ENCODE measurements at regions of chr5 and their contacts with region 1.

Region 1: DNA sequence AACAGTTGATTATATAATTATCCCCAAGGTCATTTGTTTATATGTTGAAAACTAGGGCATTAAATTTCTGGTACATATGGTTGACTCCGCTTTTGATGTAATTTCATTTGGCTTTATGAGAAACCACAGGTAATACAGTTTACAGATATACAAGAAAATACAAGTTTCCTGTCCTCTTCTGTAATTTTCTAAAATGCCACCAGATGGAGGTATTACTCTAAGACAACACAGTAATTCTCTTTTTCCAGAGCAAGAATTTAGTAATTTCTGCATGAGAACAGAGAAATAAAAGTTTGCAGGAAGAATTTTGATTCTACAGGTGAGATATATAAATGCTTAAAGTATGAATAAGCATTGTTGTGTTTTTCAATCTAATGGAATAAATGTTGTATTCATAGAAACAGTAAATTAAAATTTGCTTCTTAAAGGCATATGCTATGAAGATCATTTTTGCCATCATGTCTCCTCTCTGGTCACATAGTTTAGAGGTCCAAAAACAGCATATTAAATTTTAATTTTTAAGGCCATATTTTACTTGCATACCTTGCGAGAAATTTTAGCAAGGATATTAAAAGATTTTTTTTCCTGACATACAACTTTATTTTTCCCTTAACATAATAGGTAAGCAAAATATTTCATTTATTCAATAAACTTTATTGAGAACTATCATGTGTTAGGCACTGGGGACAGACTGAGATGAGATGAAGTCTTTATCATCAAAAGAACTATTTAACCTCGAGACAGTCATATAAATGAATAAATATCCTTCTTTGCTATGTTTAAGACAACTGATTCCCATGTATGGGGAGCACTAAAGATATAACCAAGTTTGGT is 22.7 kb downstream of the CHD1 start:
- DNase-seq: peak; percentile 32
- H3K4me3 ChIP-seq: no peak overlapping the region
- H3K27ac ChIP-seq: no peak overlapping the region
- H3K4me1 ChIP-seq: no peaks in the 10 kb centered on the region
- H3K27me3 ChIP-seq: no peaks in the 10 kb centered on the region
- CTCF ChIP-seq: peak; percentile 52 to 61

Region 2: GRCh38 chr5:98928873-98929696 is 23.0 kb after region 1 on chr5 and contains the start of gene CHD1:
- CTCF ChIA-PET with region 1: no interaction called
- dilution Hi-C with region 1: no loop called
- in situ Hi-C with region 1: no loop called
- intact Hi-C with region 1: loop called (anchors 2 kb)
- DNase-seq: peak; percentile 97
- H3K4me3 ChIP-seq: peak within 1 kb of the TSS; percentile 63 to 93 (median 80)
- H3K27ac ChIP-seq: peak within 1 kb of the TSS; percentile 93
- H3K4me1 ChIP-seq: peaks cover 13% of the 10 kb centered on the region
- H3K27me3 ChIP-seq: no peaks in the 10 kb centered on the region
- CTCF ChIP-seq: no peak
- total RNA-seq, gene CHD1: 34.9 to 39.8 TPM

Region 3: GRCh38 chr5:99060306-99061261 is 154.5 kb after region 1 on chr5:
- CTCF ChIA-PET with region 1: interaction called, 7 read pairs
- dilution Hi-C with region 1: no loop called
- in situ Hi-C with region 1: no loop called
- intact Hi-C with region 1: loop called (anchors 1 kb)
- DNase-seq: peak; percentile 55
- H3K4me3 ChIP-seq: no peak overlapping the region
- H3K27ac ChIP-seq: peak overlapping the region; percentile 62
- H3K4me1 ChIP-seq: peaks cover 21% of the 10 kb centered on the region
- H3K27me3 ChIP-seq: no peaks in the 10 kb centered on the region
- CTCF ChIP-seq: peak; percentile 84 to 91

Measured in mammary epithelial cell (primary cell).